ENCODE measurements at regions of chr18 and their contacts with region 1.

Region 1: DNA sequence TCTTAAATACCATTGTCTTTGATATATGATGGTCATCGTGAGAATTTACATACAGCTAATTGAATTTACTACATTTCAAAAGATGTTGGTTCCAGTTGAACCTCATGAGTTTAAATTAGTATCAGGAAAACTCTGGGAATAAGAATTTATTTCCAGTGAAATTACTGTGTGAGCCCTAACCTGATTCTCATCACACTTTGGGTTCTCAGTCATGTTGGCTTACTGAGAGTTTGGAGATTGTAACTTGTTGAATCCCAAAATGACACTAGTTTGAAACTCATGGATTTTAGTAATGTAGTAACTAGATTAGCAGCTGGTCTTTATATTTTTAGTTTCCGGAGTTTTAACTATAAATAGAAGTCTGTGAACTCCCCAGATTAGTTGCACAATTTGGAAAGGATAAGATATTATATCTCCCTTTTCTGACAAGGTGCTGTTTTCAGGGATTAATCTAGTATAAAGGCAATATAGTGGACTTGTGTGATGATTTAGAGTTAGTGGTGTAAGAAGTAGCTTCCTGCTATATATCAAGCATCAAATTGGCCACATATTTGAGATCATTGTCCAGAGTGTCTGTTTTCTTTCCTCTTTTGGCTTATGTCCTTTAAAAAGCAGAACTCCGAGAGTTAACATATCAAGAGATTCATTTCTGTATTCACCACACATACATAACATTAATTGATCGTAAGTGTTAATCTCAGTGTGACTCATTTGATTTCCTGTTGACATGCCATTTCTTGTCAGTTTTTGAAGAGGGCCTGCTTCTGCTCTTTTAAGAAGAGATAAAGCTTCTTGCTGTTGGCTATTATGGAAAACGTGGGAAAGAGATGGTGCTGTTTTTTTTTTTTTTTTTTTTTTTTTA is 15.7 kb downstream of the NDUFV2 start:
- DNase-seq: peak; percentile 67 to 92 (median 82)
- H3K4me3 ChIP-seq: peak overlapping the region in 3 of 7 experiments; percentile 44 to 63 (median 57)
- H3K27ac ChIP-seq: peak overlapping the region; percentile 37 to 80
- H3K4me1 ChIP-seq: peaks cover 29 to 65% (median 33%) of the 10 kb centered on the region in 4 experiments
- H3K27me3 ChIP-seq: no peaks in the 10 kb centered on the region

Region 2: DNA sequence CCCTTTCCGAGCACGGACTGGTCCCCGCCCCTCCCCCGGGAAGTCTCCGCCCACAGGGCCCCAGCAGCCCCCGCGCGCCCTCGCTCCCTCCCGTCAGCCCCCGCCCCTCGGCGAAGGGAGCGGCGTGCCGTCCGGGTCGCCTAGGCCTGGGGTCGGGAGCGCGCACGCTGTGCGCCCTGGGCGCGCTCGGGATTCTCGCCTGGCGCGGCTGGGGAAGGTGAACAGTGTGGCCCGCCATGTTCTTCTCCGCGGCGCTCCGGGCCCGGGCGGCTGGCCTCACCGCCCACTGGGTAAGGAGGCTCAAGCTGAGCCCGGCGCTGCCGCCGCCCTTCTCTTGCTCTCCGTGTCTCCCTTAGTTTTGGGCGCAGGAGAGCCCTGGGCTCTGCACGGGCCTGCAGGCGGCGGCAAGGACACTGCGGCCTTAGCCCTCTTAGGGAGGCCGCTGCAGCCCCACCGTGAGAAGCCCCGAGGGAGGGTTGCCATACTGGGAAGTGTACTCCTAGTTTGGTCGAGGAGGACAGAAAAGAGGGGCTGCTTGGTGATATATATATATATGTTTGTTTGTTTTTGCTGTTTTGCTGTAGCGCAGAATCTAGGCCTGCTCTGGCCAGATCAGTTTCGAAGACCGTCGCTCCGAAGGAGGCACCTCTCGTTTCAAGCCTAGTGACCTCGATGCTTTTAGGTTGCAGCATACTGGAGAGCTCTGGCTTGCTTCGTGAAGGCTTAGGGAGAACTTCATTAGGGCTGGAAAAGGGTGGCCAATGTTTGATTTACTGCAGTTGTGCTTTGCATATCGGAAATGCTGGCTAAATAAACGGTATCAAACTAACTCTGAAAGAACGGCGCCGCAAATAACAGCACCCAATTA is 15.5 kb before region 1 on chr18 and contains the start of gene NDUFV2:
- CTCF ChIA-PET with region 1: interaction called, 37 read pairs
- POLR2A ChIA-PET with region 1: interaction called, 7 read pairs
- DNase-seq: peak; percentile 96 to 98 (median 98)
- H3K4me3 ChIP-seq: peak within 1 kb of the TSS; percentile 80 to 97 (median 89)
- H3K27ac ChIP-seq: peak within 1 kb of the TSS; percentile 91 to 97
- H3K4me1 ChIP-seq: peaks cover 36 to 61% (median 54%) of the 10 kb centered on the region in 4 experiments
- H3K27me3 ChIP-seq: no peaks in the 10 kb centered on the region